Tibial artery (tissue), 4 donors: ENCODE measurements at regions of chr6 and their contacts with region 1.

Region 1: DNA sequence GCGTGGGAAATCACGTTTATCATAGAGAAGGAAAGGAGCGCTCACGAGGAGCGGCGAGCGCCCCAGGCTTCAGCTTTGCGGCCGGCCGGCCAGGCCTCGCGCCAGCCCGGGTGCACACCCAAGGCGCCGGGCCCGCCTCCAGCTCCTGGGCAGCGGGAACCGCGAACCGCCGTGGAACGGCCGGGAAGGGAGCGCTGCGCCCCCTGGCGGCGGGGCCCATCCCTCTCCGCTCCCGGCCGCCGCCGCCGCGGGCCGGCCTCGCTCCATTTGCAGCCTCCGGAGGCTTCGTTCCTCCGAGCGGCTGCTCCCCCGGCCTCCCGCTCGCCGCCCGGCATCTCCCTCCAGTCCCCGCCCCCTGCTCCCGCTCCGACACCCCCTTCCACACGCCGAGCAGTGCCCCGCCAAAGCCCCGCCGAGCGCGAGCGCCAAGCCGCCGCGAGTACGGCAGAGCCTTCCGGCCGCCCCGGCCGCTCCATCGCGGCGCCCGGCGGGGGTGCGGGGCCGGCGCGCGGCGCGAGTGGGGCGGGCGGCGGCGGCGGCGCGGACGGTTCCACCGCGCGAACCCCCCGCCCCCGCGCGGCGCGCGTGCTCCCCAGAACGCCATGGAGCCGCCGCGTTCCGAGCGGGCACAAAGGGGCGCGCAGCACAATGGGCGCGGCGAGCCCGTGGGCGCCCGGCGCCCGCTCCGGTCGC is 956 bp downstream of the BEND3 start:
- DNase-seq: peak; percentile 79 to 89
- H3K4me3 ChIP-seq: peak overlapping the region; percentile 65 to 81
- H3K27ac ChIP-seq: peak overlapping the region; percentile 51 to 57
- H3K4me1 ChIP-seq: peaks cover 0 to 18% (median 13%) of the 10 kb centered on the region in 4 donors
- H3K27me3 ChIP-seq: no peaks in the 10 kb centered on the region
- CTCF ChIP-seq: peak; percentile 85 to 91

Region 2: GRCh38 chr6:107033126-107033525 is 81.2 kb before region 1 on chr6:
- intact Hi-C with region 1: loop called (anchors 2 kb)
- DNase-seq: no peak
- H3K4me3 ChIP-seq: no peak overlapping the region
- H3K27ac ChIP-seq: no peak overlapping the region
- H3K4me1 ChIP-seq: peaks cover 0 to 27% (median 16%) of the 10 kb centered on the region in 4 donors
- H3K27me3 ChIP-seq: no peaks in the 10 kb centered on the region
- CTCF ChIP-seq: no peak